HCT116 (cell line): ENCODE measurements at regions of chr4 and their contacts with region 1.

Region 1: GRCh38 chr4:9691238-9692065 is 90.0 kb upstream of the DRD5 start:
- DNase-seq: peak; percentile 85
- ATAC-seq: peak; percentile 100
- H3K4me3 ChIP-seq: peak overlapping the region; percentile 38 to 55
- H3K27ac ChIP-seq: peak overlapping the region; percentile 39; the same call in 1 of the 2 replicates
- H3K4me1 ChIP-seq: peaks cover 3 to 17% of the 10 kb centered on the region in 2 experiments; a peak in 3 of 4 replicates
- H3K27me3 ChIP-seq: no peaks in the 10 kb centered on the region
- CTCF ChIP-seq: no peak
- POLR2A ChIP-seq: no peak
- RAD21 ChIP-seq: no peak

Region 2: GRCh38 chr4:10013722-10014121 is 322.3 kb after region 1 on chr4:
- CTCF ChIA-PET with region 1: interaction called, 14 read pairs
- POLR2A ChIA-PET with region 1: no interaction called
- RAD21 ChIA-PET with region 1: interaction called in 1 of 2 experiments, 3 read pairs
- intact Hi-C with region 1: no loop called
- DNase-seq: peak; percentile 18
- ATAC-seq: peak; percentile 72
- H3K4me3 ChIP-seq: no peak overlapping the region
- H3K27ac ChIP-seq: no peak overlapping the region
- H3K4me1 ChIP-seq: peaks cover 0 to 11% of the 10 kb centered on the region in 2 experiments; a peak in 1 of 4 replicates
- H3K27me3 ChIP-seq: no peaks in the 10 kb centered on the region
- CTCF ChIP-seq: peak in 2 of 3 experiments; percentile 65 to 73; a peak in 4 of 6 replicates
- POLR2A ChIP-seq: no peak
- RAD21 ChIP-seq: no peak

Region 3: GRCh38 chr4:10521424-10521823 is 830.0 kb after region 1 on chr4:
- CTCF ChIA-PET with region 1: no interaction called
- POLR2A ChIA-PET with region 1: no interaction called
- RAD21 ChIA-PET with region 1: no interaction called
- intact Hi-C with region 1: no loop called
- DNase-seq: no peak
- ATAC-seq: no peak
- H3K4me3 ChIP-seq: no peak overlapping the region
- H3K27ac ChIP-seq: no peak overlapping the region
- H3K4me1 ChIP-seq: peaks cover 10 to 18% of the 10 kb centered on the region in 2 experiments
- H3K27me3 ChIP-seq: no peaks in the 10 kb centered on the region
- CTCF ChIP-seq: no peak
- POLR2A ChIP-seq: no peak
- RAD21 ChIP-seq: no peak

Region 4: GRCh38 chr4:10998831-10999230 is 1307.4 kb after region 1 on chr4:
- CTCF ChIA-PET with region 1: no interaction called
- POLR2A ChIA-PET with region 1: no interaction called
- RAD21 ChIA-PET with region 1: no interaction called
- intact Hi-C with region 1: no loop called
- DNase-seq: no peak
- ATAC-seq: no peak
- H3K4me3 ChIP-seq: no peak overlapping the region
- H3K27ac ChIP-seq: no peak overlapping the region
- H3K4me1 ChIP-seq: no peaks in the 10 kb centered on the region
- H3K27me3 ChIP-seq: no peaks in the 10 kb centered on the region
- CTCF ChIP-seq: no peak
- POLR2A ChIP-seq: no peak
- RAD21 ChIP-seq: no peak